Prostate gland (tissue), 2 donors: ENCODE measurements at regions of chr2 and their contacts with region 1.

Region 1: GRCh38 chr2:24360050-24360962 is at the start of gene ITSN2:
- DNase-seq: peak; percentile 66
- H3K4me3 ChIP-seq: peak within 1 kb of the TSS; percentile 88 to 96
- H3K27ac ChIP-seq: peak within 1 kb of the TSS; percentile 97 to 99
- H3K4me1 ChIP-seq: no peaks in the 10 kb centered on the region
- H3K27me3 ChIP-seq: no peaks in the 10 kb centered on the region
- CTCF ChIP-seq: no peak
- POLR2A ChIP-seq: peak; percentile 66
- total RNA-seq, gene ITSN2: 42.8 to 45.7 TPM

Region 2: GRCh38 chr2:24304098-24304497 is 56.2 kb before region 1 on chr2:
- intact Hi-C with region 1: loop called (anchors 5 kb)
- DNase-seq: peak; percentile 82
- H3K4me3 ChIP-seq: no peak overlapping the region
- H3K27ac ChIP-seq: peak overlapping the region; percentile 14 to 58
- H3K4me1 ChIP-seq: no peaks in the 10 kb centered on the region
- H3K27me3 ChIP-seq: no peaks in the 10 kb centered on the region
- CTCF ChIP-seq: no peak
- POLR2A ChIP-seq: no peak

Region 3: DNA sequence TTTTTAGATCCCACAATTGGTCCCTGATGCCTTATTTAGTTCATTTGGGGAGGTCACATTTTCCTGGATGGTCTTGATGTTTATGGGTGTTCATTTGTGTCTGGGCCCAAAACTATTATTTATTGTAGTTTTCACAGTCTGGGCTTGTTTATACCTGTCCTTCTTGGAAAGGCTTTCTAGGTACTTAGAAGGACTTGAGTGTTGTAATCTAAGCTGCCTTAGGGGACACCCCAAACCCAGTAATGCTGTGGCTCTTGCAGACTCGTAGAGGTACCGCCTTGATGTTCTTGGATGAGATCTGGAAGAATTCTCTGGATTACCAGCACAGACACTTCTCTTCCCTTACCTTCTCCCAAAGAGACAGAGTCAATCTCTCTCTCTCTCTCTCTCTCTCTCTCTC is 25.1 kb after region 1 on chr2:
- intact Hi-C with region 1: no loop called
- DNase-seq: no peak
- H3K4me3 ChIP-seq: no peak overlapping the region
- H3K27ac ChIP-seq: no peak overlapping the region
- H3K4me1 ChIP-seq: no peaks in the 10 kb centered on the region
- H3K27me3 ChIP-seq: no peaks in the 10 kb centered on the region
- CTCF ChIP-seq: no peak
- POLR2A ChIP-seq: no peak

Region 4: GRCh38 chr2:24409700-24410556 is 49.6 kb after region 1 on chr2:
- intact Hi-C with region 1: no loop called
- DNase-seq: peak; percentile 39
- H3K4me3 ChIP-seq: no peak overlapping the region
- H3K27ac ChIP-seq: no peak overlapping the region
- H3K4me1 ChIP-seq: no peaks in the 10 kb centered on the region
- H3K27me3 ChIP-seq: no peaks in the 10 kb centered on the region
- CTCF ChIP-seq: peak; percentile 22 to 79 (median 79)
- POLR2A ChIP-seq: no peak